PC-3 (cell line): ENCODE measurements at regions of chr4 and their contacts with region 1.

Region 1: GRCh38 chr4:112664611-112665010 is 27.7 kb downstream of the LARP7 start:
- DNase-seq: peak; percentile 74
- ATAC-seq: peak; percentile 98
- H3K4me3 ChIP-seq: no peak overlapping the region
- H3K27ac ChIP-seq: no peak overlapping the region
- H3K4me1 ChIP-seq: no peaks in the 10 kb centered on the region
- H3K27me3 ChIP-seq: no peaks in the 10 kb centered on the region
- CTCF ChIP-seq: no peak

Region 2: DNA sequence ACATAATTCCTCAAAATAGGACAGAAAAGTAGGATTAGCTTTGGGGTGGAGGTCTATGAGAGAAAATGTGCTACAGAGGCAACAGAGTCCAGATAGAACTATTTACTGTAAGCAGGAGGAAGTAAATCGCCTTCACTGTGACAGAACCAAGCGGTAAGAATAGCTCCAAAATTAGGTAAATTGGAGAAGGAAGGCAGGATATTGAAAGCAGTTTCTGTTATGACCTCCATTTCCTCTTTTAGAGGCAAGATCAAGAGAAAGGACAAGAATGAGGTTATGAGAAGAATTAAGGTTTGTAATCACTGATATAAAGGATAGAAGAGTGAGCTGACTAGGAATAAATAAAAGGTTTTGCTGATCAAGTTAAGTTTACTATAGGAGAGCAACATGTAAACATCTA is 104.5 kb before region 1 on chr4:
- CTCF ChIA-PET with region 1: no interaction called
- POLR2A ChIA-PET with region 1: interaction called, 20 read pairs
- intact Hi-C with region 1: no loop called
- DNase-seq: no peak
- ATAC-seq: no peak
- H3K4me3 ChIP-seq: no peak overlapping the region
- H3K27ac ChIP-seq: no peak overlapping the region
- H3K4me1 ChIP-seq: peaks cover 6% of the 10 kb centered on the region; the same call in 1 of the 2 replicates
- H3K27me3 ChIP-seq: no peaks in the 10 kb centered on the region
- CTCF ChIP-seq: no peak

Region 3: GRCh38 chr4:112813790-112814189 is 149.2 kb after region 1 on chr4:
- CTCF ChIA-PET with region 1: no interaction called
- POLR2A ChIA-PET with region 1: no interaction called
- intact Hi-C with region 1: no loop called
- DNase-seq: no peak
- ATAC-seq: no peak
- H3K4me3 ChIP-seq: no peak overlapping the region
- H3K27ac ChIP-seq: no peak overlapping the region
- H3K4me1 ChIP-seq: no peaks in the 10 kb centered on the region
- H3K27me3 ChIP-seq: no peaks in the 10 kb centered on the region
- CTCF ChIP-seq: no peak